Panc1 (cell line): ENCODE measurements at regions of chr16 and their contacts with region 1.

Region 1: GRCh38 chr16:73572135-73572828 is 524.4 kb upstream of the ZFHX3 start:
- DNase-seq: no peak
- ATAC-seq: no peak
- H3K4me3 ChIP-seq: no peak overlapping the region
- H3K27ac ChIP-seq: no peak overlapping the region
- H3K4me1 ChIP-seq: no peaks in the 10 kb centered on the region
- H3K27me3 ChIP-seq: 0 out of 2 replicates have a peak, but pooled peaks cover 2% of the 10 kb centered on the region
- CTCF ChIP-seq: no peak

Region 2: DNA sequence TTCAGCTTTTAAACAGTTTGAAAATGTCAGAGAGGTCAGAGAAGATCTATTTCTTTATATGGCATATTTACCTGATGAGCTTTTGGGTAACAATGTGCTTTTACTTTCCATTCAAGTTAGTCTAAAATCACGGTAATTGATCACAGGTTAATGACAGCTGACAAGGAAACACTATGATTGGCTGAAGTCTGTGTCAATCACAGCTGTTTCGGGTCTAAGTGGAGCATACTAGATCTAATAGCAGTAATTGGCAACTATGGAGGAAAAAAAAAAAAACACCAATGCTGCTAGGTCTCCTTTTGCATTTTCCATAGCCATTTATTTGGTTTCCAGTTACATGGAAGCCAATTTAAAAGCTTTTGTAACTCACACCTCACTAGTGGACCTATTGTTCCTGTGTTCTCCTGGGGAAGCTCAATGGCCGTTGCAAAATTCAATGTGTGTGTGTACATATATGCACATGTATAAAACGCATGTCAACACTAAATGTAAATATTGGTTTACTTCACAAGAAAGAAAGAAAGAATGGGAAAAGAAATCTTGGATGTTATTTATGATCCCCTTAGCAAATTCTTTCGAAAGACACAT is 44.0 kb after region 1 on chr16:
- CTCF ChIA-PET with region 1: no interaction called
- POLR2A ChIA-PET with region 1: interaction called, 12 read pairs
- in situ Hi-C with region 1: no loop called
- intact Hi-C with region 1: no loop called
- DNase-seq: no peak
- ATAC-seq: no peak
- H3K4me3 ChIP-seq: no peak overlapping the region
- H3K27ac ChIP-seq: no peak overlapping the region
- H3K4me1 ChIP-seq: no peaks in the 10 kb centered on the region
- H3K27me3 ChIP-seq: peaks cover 3% of the 10 kb centered on the region
- CTCF ChIP-seq: no peak